IMR-90 (cell line): ENCODE measurements at regions of chr1 and their contacts with region 1.

Region 1: DNA sequence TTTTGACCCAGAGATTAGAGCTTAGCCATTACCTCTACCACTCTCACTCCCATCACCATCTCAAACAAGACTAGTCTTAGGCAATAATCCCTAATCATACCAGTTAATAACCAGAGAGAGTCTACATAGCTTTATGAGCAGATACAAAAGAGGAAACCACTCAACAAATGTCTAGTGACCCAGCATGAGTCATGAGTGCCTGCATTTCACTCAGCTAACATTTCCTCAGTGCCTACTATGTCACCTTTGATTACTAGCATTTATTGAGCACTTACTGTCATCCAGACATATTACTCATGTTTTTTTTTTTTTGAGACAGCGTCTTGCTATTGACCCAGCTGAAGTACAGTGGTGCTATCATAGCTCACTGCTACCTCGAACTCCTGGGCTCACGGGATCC is 35.9 kb upstream of the GALNT2 start:
- DNase-seq: no peak
- ATAC-seq: no peak
- H3K4me3 ChIP-seq: no peak overlapping the region
- H3K27ac ChIP-seq: no peak overlapping the region
- H3K4me1 ChIP-seq: no peaks in the 10 kb centered on the region
- H3K27me3 ChIP-seq: no peaks in the 10 kb centered on the region; the same call in 1 of the 2 replicates
- CTCF ChIP-seq: no peak
- POLR2A ChIP-seq: no peak
- RAD21 ChIP-seq: no peak

Region 2: DNA sequence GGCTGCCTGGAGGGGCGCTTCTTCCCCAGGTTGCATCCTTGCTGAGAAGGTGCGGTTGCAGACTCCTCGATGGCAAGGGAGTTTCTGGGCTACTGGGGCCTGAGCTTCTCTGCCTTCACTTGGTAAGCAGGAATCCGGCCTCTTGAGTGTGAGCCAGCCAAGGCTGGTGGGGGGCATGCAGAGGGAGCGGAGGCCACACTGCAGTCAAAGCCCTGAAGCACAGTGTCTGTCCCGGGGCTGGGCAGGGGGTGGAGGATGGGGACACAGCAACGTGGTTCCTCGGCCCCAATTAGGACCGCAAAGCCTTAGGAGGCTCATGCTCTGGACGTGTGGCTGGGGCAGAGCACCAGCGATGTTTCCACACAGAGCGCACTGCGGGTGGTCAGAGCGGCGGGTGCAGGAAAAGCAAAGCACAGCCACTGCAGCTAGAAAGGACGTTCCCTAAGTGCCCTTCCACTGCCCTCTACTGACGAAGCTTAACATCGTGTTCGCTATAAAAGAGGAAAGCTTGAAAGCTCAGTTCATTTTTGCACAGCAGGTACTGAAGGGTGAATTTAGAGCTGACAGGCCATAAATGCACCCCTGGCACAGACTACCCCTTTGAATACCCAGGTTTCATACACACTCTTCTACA is 550.4 kb after region 1 on chr1:
- CTCF ChIA-PET with region 1: no interaction called
- POLR2A ChIA-PET with region 1: no interaction called
- dilution Hi-C with region 1: no loop called
- in situ Hi-C with region 1: loop called (anchors 25 kb)
- intact Hi-C with region 1: no loop called
- DNase-seq: no peak
- ATAC-seq: no peak
- H3K4me3 ChIP-seq: no peak overlapping the region
- H3K27ac ChIP-seq: no peak overlapping the region
- H3K4me1 ChIP-seq: no peaks in the 10 kb centered on the region
- H3K27me3 ChIP-seq: no peaks in the 10 kb centered on the region
- CTCF ChIP-seq: no peak
- POLR2A ChIP-seq: no peak
- RAD21 ChIP-seq: no peak